Left ventricle myocardium superior (tissue), 1 donor: ENCODE measurements at regions of chr2 and their contacts with region 1.

Region 1: GRCh38 chr2:42865884-42866881 is 73.8 kb upstream of the HAAO start:
- DNase-seq: peak; percentile 73
- ATAC-seq: peak; percentile 87

Region 2: DNA sequence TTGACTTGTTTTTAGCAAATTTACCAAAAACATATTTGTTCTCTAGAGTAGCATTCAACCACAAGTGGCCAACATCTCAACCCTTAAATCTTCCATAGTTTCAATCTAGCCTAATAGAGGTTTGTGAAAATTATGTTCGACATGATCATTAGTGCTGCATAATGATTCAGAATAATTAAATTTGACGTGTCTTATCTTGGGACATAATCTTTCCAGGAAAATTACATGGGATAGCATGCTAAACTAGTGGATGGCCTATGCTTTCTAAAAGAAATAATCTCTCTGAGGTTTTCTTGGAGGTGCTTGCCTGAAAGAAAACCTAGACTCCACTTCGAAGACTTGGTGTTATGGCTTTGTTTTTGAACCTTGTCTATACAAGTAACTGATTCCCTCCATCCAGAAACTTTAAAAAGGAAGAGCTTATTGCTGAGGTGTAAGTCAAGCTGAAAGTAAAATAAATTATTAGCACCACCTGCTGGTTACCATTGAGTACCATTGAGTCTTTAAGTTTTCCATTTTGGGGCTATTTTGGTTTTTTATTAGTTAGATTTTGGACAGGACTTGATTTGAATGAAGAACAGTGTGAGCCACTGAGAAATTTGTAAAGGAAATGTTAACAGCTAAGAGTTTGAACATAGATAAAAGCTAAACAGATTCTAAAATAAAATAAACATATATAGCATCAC is 537.9 kb before region 1 on chr2:
- intact Hi-C with region 1: no loop called
- DNase-seq: no peak
- ATAC-seq: no peak

Region 3: DNA sequence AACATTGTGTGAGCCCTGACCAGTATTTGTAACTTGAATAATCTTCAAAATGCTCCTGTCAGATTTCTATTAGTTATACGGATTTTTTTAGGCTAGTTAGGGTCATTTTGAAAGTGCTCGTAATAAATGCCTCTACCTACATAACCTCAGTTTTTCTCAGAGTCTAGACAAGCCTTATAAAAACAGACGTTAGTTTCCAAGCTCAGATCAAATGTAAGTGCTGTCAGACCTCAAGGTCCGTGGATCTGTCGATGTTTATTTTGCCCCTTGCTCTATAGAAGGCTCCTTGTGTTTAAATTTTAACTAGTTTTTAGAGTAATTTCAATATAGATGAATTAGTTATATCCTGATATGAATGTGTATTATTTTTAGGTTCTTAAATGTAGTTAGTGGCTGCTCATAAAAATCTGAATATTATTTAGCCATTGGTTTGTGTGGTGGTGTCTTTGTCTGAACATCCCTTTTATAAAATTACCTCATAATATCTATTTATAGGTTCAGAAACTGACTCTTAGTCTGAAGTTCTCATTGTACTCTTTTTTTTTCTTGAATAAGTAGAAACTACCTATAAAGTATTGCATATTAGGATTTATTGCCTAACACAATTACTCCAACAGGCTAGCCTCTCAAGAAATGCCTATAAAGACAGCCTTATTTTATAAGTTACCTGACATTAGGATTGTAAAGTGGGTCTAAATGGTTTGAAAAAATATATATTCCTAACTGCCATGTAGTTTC is 226.7 kb before region 1 on chr2:
- intact Hi-C with region 1: no loop called
- DNase-seq: no peak
- ATAC-seq: no peak

Region 4: DNA sequence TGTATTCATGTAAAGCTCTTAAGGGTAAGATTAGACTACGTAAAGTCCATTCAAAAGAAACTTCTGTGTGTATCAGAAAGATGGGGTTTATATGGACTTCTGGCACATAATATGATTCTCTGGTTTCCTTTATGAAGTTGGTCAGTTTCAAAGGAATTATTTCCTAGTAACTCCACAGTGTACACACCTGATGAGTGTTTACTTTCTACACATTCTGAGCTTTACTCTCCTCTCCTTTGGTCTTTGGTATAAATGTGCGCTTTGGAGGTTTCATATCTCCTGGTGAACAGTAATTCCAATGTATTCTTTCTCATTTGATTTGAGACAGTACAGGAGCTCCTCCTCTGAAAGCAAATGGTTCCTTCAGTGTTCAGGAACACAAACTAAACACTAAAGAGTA is 190.4 kb before region 1 on chr2:
- intact Hi-C with region 1: no loop called
- DNase-seq: no peak
- ATAC-seq: no peak

Region 5: DNA sequence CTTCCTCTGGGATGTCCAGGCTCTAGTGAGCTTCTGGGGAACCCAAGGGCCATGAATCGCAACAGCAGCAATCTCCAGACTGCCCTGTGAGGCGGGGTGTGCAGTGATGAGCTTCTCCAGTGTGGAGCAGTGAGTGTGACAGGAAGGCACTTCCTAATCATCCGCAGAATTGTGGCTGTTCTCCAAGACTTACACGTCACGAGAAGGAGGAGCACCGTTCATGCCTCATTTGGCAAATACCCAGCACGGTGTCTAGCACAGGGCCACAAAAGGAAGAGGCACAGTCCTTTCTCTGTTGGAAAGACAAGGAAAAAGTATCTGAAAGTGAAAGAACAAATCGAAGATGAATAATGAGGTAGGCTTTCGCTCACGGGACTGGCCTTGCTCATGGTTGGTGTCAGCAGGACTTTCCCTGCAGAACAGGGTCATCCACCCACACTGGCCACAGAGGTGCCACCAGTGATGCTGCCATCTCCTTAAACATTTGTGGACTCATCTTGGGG is 51.3 kb after region 1 on chr2:
- intact Hi-C with region 1: loop called (anchors 10 kb)
- DNase-seq: no peak
- ATAC-seq: peak; percentile 79